ENCODE measurements at regions of chr1 and their contacts with region 1.

Region 1: DNA sequence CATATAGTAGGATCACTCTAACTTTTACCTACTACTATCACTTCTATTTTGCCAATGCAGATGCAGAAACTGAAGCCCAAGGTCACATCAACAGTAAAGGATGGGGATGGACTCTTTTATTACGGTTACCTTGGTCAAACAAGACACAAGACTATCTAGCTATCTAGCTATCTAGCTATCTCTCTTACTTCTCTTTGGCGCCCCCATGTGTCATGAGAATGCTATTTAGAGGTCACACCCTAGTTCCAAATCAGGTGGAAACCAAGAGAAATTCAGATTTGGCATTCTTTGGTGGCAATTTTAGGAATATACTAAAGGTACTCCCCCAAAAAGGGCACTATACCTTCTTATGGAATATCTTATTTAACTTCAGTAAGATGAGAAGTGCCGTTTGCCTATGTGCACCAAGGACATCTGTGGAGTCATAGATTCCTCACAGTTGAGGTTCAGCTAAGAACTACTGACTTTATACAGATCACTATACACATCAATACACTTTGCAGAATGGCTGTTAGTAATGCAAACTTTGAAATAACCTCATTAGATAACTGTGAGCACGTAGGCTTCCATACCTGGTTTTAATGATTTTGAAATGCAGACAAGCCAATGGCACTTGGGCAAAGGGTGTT is 6.7 kb downstream of the ZNF648 start:
- DNase-seq: peak in 8 of 9 donors; percentile 27 to 63 (median 54)
- ATAC-seq: peak; percentile 69
- H3K4me3 ChIP-seq: no peak overlapping the region
- H3K4me3 Mint-ChIP-seq: no peak overlapping the region
- H3K27ac ChIP-seq: no peak overlapping the region
- H3K27ac Mint-ChIP-seq: no peak overlapping the region
- H3K4me1 ChIP-seq: no peaks in the 10 kb centered on the region
- H3K4me1 Mint-ChIP-seq: peaks cover 0 to 23% (median 0%) of the 10 kb centered on the region in 7 donors
- H3K27me3 ChIP-seq: no peaks in the 10 kb centered on the region
- H3K27me3 Mint-ChIP-seq: peaks cover 10 to 33% (median 24%) of the 10 kb centered on the region in 5 donors

Region 2: DNA sequence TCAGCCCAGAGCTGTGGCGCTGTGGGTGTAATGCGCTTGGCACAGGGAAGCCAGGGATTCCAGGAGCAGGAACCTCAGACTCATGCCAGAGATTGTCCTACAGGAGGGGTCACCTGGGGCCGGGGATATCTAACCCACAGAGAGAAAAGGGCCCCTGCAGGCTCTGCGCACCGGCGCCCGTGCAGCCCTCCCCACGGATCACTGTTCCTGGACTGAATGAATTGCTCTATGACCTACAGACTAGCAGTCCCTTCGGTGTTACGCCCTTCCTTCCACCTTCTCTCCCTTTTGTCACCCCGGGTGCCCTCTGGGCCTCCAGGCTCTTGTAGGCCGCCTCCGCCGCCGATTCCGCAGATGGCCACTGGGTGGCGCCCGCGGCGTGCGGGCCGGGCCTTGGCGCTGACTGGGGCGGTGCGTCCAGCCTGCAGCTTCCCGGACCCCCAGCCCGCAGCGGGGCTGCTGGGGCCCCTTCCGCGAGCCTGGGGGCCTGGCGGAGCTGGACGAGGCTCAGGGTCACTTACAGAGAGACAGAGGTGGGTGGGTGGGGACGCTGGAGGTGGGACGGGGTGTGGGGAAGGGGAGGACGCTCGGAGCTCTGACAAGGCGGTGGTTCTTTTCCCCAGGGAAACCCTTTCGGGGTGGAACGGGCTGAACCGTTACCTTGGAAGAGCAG is 865.0 kb before region 1 on chr1:
- CTCF ChIA-PET with region 1: interaction called, 5 read pairs
- POLR2A ChIA-PET with region 1: no interaction called
- intact Hi-C with region 1: loop called in 1 of 2 experiments (anchors 1 kb)
- DNase-seq: peak; percentile 49 to 95 (median 79)
- ATAC-seq: peak; percentile 88
- H3K4me3 ChIP-seq: no peak overlapping the region
- H3K4me3 Mint-ChIP-seq: peak overlapping the region in 8 of 10 donors; percentile 22 to 77 (median 55)
- H3K27ac ChIP-seq: no peak overlapping the region
- H3K27ac Mint-ChIP-seq: no peak overlapping the region
- H3K4me1 ChIP-seq: peaks cover 0 to 4% of the 10 kb centered on the region in 2 donors
- H3K4me1 Mint-ChIP-seq: peaks cover 0 to 13% (median 6%) of the 10 kb centered on the region in 7 donors
- H3K27me3 ChIP-seq: no peaks in the 10 kb centered on the region
- H3K27me3 Mint-ChIP-seq: peaks cover 0 to 22% (median 11%) of the 10 kb centered on the region in 5 donors

Region 3: GRCh38 chr1:181479137-181479745 is 575.6 kb before region 1 on chr1:
- CTCF ChIA-PET with region 1: interaction called, 14 read pairs
- POLR2A ChIA-PET with region 1: no interaction called
- intact Hi-C with region 1: loop called in 1 of 2 experiments (anchors 1 kb)
- DNase-seq: peak in 5 of 9 donors; percentile 25 to 40 (median 26)
- ATAC-seq: peak; percentile 64
- H3K4me3 ChIP-seq: no peak overlapping the region
- H3K4me3 Mint-ChIP-seq: no peak overlapping the region
- H3K27ac ChIP-seq: no peak overlapping the region
- H3K27ac Mint-ChIP-seq: no peak overlapping the region
- H3K4me1 ChIP-seq: no peaks in the 10 kb centered on the region
- H3K4me1 Mint-ChIP-seq: peaks cover 9 to 16% (median 12%) of the 10 kb centered on the region in 7 donors
- H3K27me3 ChIP-seq: peaks cover 0 to 5% of the 10 kb centered on the region in 2 donors
- H3K27me3 Mint-ChIP-seq: peaks cover 34 to 58% (median 46%) of the 10 kb centered on the region in 5 donors

Region 4: DNA sequence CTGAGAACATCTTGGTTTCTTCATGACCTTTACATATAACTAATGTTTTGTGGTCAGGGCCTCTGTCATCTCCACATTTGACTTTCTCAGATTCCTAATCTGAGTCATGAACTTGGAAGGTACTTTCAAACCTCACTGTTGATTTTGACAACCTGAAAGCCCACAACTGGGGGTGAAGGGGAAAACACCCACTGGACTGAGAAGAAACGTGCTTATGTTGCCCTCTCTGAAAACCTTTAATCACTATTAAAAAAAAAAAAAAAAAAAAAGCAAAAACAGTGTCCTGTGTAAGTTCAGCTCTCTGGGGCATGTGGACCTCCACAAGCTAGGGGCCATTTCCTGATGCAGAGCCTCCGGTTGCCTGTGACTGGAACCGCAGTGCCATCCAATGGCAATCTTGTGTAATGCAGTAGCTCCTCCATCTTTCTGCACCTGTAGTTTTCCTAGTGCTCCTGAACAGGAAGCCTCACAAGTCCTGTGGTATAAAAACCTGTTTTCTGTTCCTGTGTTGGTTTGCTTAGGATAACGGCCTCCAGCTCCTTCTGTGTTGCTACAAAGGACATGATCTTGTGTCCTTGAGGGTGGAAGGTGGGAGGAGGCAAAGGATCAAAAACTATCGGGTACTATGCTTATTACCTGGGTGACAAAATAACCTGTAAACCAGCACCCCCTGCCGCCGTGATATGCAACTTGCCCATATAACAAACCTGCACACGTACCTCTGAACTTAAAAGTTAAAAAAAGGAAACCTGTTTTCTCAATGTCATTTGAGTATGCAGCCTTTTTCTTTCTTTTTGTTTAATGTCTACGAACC is 117.8 kb before region 1 on chr1:
- CTCF ChIA-PET with region 1: interaction called, 6 read pairs
- POLR2A ChIA-PET with region 1: no interaction called
- intact Hi-C with region 1: loop called (anchors 1 to 10 kb)
- DNase-seq: peak in 8 of 9 donors; percentile 13 to 50 (median 26)
- ATAC-seq: peak; percentile 69
- H3K4me3 ChIP-seq: no peak overlapping the region
- H3K4me3 Mint-ChIP-seq: peak overlapping the region in 5 of 10 donors; percentile 33 to 69 (median 40)
- H3K27ac ChIP-seq: no peak overlapping the region
- H3K27ac Mint-ChIP-seq: no peak overlapping the region
- H3K4me1 ChIP-seq: no peaks in the 10 kb centered on the region
- H3K4me1 Mint-ChIP-seq: peaks cover 0 to 5% (median 0%) of the 10 kb centered on the region in 7 donors
- H3K27me3 ChIP-seq: no peaks in the 10 kb centered on the region
- H3K27me3 Mint-ChIP-seq: peaks cover 0 to 5% (median 0%) of the 10 kb centered on the region in 5 donors

Region 5: DNA sequence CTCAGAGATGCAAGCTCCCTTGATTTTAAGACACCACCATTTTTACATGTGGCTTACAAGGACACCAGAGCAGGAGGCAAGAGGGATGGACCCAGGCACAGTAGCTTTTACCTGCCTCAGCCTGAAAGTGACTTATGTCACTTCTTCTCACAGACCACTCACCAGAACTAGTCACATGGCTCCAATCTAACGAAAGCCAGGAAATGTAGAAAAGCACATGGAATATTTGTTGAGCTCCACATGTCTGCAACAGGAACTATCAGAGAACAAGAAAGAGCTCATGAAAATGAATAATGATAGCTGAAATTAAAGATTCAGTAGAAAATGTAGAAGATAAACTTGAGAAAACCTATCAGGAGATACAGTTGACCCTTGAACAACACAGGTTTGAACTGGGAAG is 62.7 kb before region 1 on chr1:
- CTCF ChIA-PET with region 1: no interaction called
- POLR2A ChIA-PET with region 1: no interaction called
- intact Hi-C with region 1: loop called in 1 of 2 experiments (anchors 2 kb)
- DNase-seq: no peak
- ATAC-seq: no peak
- H3K4me3 ChIP-seq: no peak overlapping the region
- H3K4me3 Mint-ChIP-seq: no peak overlapping the region
- H3K27ac ChIP-seq: no peak overlapping the region
- H3K27ac Mint-ChIP-seq: no peak overlapping the region
- H3K4me1 ChIP-seq: no peaks in the 10 kb centered on the region
- H3K4me1 Mint-ChIP-seq: no peaks in the 10 kb centered on the region
- H3K27me3 ChIP-seq: peaks cover 0 to 4% of the 10 kb centered on the region in 2 donors
- H3K27me3 Mint-ChIP-seq: peaks cover 0 to 8% (median 4%) of the 10 kb centered on the region in 5 donors

Region 6: DNA sequence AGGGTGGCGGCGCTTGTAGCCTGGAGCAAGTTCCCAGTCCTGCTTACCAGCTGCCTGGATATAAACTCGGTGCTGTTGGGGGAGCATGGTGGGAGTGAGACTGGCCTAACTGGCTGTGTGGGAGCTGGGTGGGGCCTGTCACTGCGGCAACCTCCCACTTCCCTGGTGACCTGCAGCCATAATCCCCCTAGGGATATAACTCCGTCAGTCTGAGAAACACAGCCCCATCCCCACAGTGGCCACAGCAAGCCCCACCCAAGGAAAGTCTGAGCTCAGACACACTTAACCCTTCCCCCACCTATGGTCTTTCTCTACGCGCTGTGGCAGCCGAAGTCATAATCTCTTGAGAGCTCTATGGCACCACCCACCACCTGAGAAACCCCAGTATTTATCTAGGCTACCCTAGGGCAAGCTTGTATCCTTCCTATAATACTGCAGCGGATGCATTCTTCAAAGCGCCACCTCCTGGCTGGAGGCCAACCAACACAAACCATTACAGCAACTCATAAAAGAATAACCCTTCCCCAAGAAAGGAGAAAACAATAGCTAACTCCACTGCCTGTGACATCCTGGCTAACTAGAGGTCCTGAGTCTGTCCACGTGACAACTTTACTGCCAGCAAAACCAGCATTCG is 50.7 kb before region 1 on chr1:
- CTCF ChIA-PET with region 1: no interaction called
- POLR2A ChIA-PET with region 1: no interaction called
- intact Hi-C with region 1: loop called in 1 of 2 experiments (anchors 10 kb)
- DNase-seq: no peak
- ATAC-seq: no peak
- H3K4me3 ChIP-seq: no peak overlapping the region
- H3K4me3 Mint-ChIP-seq: no peak overlapping the region
- H3K27ac ChIP-seq: no peak overlapping the region
- H3K27ac Mint-ChIP-seq: no peak overlapping the region
- H3K4me1 ChIP-seq: no peaks in the 10 kb centered on the region
- H3K4me1 Mint-ChIP-seq: peaks cover 0 to 9% (median 2%) of the 10 kb centered on the region in 7 donors
- H3K27me3 ChIP-seq: no peaks in the 10 kb centered on the region
- H3K27me3 Mint-ChIP-seq: peaks cover 4 to 30% (median 16%) of the 10 kb centered on the region in 5 donors

Region 7: DNA sequence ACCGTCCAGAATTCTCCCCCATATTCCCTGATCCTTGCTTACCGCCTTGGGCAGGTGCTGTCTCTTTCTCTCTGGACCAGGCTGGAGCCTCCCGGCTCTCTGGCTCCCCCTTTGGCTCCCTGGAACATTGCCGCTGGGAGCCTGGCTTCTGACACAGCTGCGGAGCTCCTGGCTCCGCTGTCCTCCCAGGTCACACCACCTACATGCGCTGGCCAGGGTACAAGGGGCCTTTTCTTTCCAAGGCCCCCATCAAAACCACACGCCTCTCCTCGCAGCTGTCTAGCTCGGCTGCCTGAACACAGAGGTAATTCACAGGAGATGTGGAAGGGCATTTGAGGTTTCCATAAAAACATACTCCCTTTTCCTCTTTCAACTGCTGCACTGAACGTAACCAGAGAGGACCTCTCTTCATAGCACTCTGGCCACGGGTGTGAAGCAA is 14.2 kb after region 1 on chr1:
- CTCF ChIA-PET with region 1: interaction called, 10 read pairs
- POLR2A ChIA-PET with region 1: no interaction called
- intact Hi-C with region 1: no loop called
- DNase-seq: peak in 1 of 9 donors; percentile 41
- ATAC-seq: peak; percentile 51
- H3K4me3 ChIP-seq: no peak overlapping the region
- H3K4me3 Mint-ChIP-seq: peak overlapping the region in 1 of 10 donors; percentile 35
- H3K27ac ChIP-seq: no peak overlapping the region
- H3K27ac Mint-ChIP-seq: no peak overlapping the region
- H3K4me1 ChIP-seq: no peaks in the 10 kb centered on the region
- H3K4me1 Mint-ChIP-seq: peaks cover 0 to 10% (median 2%) of the 10 kb centered on the region in 7 donors
- H3K27me3 ChIP-seq: no peaks in the 10 kb centered on the region
- H3K27me3 Mint-ChIP-seq: peaks cover 11 to 37% (median 30%) of the 10 kb centered on the region in 5 donors

Region 8: GRCh38 chr1:182101415-182102042 is 46.7 kb after region 1 on chr1:
- CTCF ChIA-PET with region 1: no interaction called
- POLR2A ChIA-PET with region 1: no interaction called
- intact Hi-C with region 1: no loop called
- DNase-seq: no peak
- ATAC-seq: no peak
- H3K4me3 ChIP-seq: no peak overlapping the region
- H3K4me3 Mint-ChIP-seq: no peak overlapping the region
- H3K27ac ChIP-seq: no peak overlapping the region
- H3K27ac Mint-ChIP-seq: no peak overlapping the region
- H3K4me1 ChIP-seq: no peaks in the 10 kb centered on the region
- H3K4me1 Mint-ChIP-seq: peaks cover 0 to 3% (median 0%) of the 10 kb centered on the region in 7 donors
- H3K27me3 ChIP-seq: no peaks in the 10 kb centered on the region
- H3K27me3 Mint-ChIP-seq: peaks cover 0 to 66% (median 0%) of the 10 kb centered on the region in 5 donors